CD4-positive, alpha-beta memory T cell (primary cell): ENCODE measurements at regions of chr2 and their contacts with region 1.

Region 1: DNA sequence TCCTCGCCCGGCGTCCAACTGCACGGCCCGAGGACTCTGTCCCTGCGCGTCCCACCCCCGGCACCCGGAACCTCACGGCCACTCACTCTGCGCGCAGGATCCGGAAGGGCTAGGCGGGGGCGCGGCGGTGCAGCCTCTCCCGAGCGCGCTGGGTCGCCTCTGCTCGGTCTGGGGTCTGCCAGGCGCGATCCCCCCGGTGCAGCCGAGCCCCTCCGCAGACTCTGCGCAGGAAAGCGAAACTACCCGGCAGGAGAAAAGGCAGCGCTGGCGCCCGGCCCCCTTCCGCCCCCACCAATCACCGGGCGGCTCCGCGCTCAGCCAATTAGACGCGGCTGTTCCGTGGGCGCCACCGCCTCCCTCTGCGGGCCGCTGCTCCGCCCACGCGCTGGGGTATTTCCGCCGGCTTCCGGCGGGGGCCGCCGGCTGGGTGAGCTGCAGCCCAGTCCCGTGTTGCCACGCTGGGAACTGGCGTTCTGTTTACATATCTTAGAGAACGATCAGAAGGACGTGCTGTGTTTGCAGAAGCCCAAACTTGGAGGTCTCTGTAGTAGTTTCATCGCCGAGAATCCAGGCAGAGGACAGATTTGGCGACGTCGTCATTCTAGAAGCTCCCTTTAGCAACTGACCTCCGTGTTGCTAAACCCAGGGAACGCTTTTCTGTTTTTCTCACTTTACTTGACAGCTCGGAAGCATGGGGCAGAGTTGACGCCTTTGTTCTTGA is at the start of gene STAT1:
- DNase-seq: peak; percentile 94 to 98 (median 96)
- H3K4me3 ChIP-seq: peak within 1 kb of the TSS; percentile 92 to 95
- H3K4me3 Mint-ChIP-seq: no peak within 1 kb of the TSS
- H3K27ac ChIP-seq: peak within 1 kb of the TSS; percentile 89
- H3K27ac Mint-ChIP-seq: no peak within 1 kb of the TSS
- H3K4me1 ChIP-seq: peaks cover 71% of the 10 kb centered on the region
- H3K4me1 Mint-ChIP-seq: peaks cover 29 to 48% (median 33%) of the 10 kb centered on the region in 4 donors
- H3K27me3 ChIP-seq: no peaks in the 10 kb centered on the region
- H3K27me3 Mint-ChIP-seq: no peaks in the 10 kb centered on the region
- total RNA-seq, gene STAT1: 130 TPM

Region 2: DNA sequence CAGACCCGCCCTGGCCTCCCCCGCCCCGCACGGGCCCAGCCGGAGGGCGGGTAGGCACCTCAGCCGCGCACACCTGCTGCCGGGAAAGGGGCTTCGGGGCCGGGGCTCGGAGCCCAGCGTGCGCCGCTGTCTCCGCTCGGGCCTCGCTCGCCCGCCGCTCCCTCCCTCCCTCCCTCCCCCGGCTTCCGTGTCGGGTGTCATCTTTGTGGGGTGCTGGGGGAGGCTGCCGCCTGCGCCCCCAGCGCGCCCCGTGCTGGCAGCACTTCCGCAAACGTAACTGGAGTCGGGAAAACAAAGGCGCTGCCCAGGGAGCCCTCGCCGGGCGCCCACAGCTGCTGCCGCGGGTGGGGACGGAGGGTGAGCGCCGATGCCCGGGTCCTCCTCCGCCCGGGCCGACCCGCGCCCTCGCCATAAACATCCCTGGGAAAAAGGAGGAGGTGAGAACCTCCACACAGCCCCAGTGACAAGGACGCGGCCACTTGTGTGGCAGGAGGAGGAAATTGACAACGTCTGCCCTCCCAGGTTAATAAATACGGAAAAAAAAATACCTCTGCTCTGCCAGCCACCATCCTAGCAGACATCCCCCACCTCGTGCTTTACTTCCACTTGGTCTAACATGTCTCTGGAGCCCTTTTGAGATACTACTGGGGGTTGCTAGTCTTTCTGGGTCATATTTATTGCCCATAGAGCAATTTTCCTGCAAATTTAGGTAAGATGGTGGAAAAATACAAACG is 605.4 kb before region 1 on chr2:
- CTCF ChIA-PET with region 1: no interaction called
- POLR2A ChIA-PET with region 1: no interaction called
- intact Hi-C with region 1: loop called (anchors 10 kb)
- DNase-seq: peak; percentile 78 to 86 (median 84)
- H3K4me3 ChIP-seq: peak overlapping the region; percentile 67 to 78
- H3K4me3 Mint-ChIP-seq: peak overlapping the region; percentile 89 to 95 (median 92)
- H3K27ac ChIP-seq: peak overlapping the region; percentile 96
- H3K27ac Mint-ChIP-seq: peak overlapping the region; percentile 96 to 99 (median 98)
- H3K4me1 ChIP-seq: peaks cover 54% of the 10 kb centered on the region
- H3K4me1 Mint-ChIP-seq: peaks cover 37 to 52% (median 41%) of the 10 kb centered on the region in 4 donors
- H3K27me3 ChIP-seq: no peaks in the 10 kb centered on the region
- H3K27me3 Mint-ChIP-seq: no peaks in the 10 kb centered on the region

Region 3: GRCh38 chr2:190996338-190996946 is 17.6 kb before region 1 on chr2:
- CTCF ChIA-PET with region 1: interaction called, 13 read pairs
- POLR2A ChIA-PET with region 1: interaction called, 5 read pairs
- intact Hi-C with region 1: loop called (anchors 2 kb)
- DNase-seq: peak in 4 of 5 donors; percentile 21 to 40 (median 37)
- H3K4me3 ChIP-seq: no peak overlapping the region
- H3K4me3 Mint-ChIP-seq: no peak overlapping the region
- H3K27ac ChIP-seq: no peak overlapping the region
- H3K27ac Mint-ChIP-seq: peak overlapping the region; percentile 75 to 92 (median 83)
- H3K4me1 ChIP-seq: peaks cover 11% of the 10 kb centered on the region
- H3K4me1 Mint-ChIP-seq: peaks cover 32 to 63% (median 36%) of the 10 kb centered on the region in 4 donors
- H3K27me3 ChIP-seq: no peaks in the 10 kb centered on the region
- H3K27me3 Mint-ChIP-seq: no peaks in the 10 kb centered on the region

Region 4: DNA sequence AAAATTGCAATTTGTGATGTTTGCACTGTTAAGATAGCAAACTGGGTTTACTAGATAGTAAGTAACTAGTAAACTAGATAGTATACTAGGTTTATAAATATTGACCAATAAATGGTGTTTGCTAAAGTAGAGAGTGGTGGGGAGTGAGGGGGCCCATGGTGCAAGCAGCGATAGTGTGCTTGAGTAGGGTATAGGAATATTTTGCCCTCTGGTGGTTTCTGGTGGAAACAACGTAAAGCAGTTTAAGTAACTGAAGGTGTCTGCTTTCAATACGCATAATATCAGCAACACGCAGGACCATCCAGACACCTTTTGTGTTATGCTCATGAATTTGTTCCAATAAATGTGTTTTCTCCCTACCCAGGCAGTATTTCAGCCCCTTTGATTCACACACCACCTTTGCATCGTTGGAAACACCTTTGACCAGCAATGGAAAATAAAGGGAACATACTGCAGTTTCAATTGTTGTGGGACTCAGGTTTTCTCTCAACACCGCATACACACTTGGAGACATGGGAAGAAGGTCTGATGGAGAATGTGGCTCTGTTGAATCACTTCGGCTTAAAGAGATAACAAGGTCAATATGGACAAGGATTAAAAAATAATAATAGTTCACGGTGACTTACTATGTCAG is 16.5 kb after region 1 on chr2:
- CTCF ChIA-PET with region 1: interaction called, 28 read pairs
- POLR2A ChIA-PET with region 1: interaction called, 155 read pairs
- intact Hi-C with region 1: loop called (anchors 1 kb)
- DNase-seq: peak; percentile 52 to 69 (median 56)
- H3K4me3 ChIP-seq: no peak overlapping the region
- H3K4me3 Mint-ChIP-seq: peak overlapping the region in 4 of 8 donors; percentile 1 to 47 (median 7)
- H3K27ac ChIP-seq: peak overlapping the region; percentile 21
- H3K27ac Mint-ChIP-seq: peak overlapping the region; percentile 15 to 84 (median 44)
- H3K4me1 ChIP-seq: peaks cover 34% of the 10 kb centered on the region
- H3K4me1 Mint-ChIP-seq: peaks cover 21 to 37% (median 30%) of the 10 kb centered on the region in 4 donors
- H3K27me3 ChIP-seq: no peaks in the 10 kb centered on the region
- H3K27me3 Mint-ChIP-seq: no peaks in the 10 kb centered on the region

Region 5: DNA sequence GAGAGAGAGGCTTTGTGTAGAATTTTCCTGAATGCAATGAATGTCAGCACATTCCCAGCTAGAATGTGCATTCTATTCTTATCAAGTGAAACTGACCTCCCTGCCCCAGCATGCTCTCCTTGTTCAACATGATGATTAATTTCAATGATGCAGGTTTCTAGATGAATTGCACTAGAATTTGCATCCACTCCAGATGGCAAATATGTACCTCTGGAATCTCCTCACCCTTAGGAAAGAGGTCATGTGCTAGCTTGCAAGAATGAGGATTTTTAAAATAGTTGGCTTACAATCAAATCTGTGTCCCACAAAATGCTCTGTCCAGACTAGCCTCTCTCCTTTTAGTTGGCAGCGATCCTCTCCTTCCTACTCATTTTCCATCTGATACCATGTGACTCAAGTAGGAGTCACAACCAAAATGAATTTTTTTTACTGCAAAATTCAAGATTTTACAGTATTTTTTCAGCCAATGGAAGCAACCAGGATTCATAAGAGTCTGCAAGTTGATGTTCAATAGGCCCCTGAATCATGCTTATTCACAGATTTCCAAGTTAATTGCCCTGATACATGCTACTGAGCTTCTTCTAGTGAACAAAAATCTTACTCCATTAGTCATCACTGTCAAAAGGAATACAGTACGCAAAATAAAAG is 157.7 kb after region 1 on chr2:
- CTCF ChIA-PET with region 1: no interaction called
- POLR2A ChIA-PET with region 1: no interaction called
- intact Hi-C with region 1: no loop called
- DNase-seq: no peak
- H3K4me3 ChIP-seq: no peak overlapping the region
- H3K4me3 Mint-ChIP-seq: no peak overlapping the region
- H3K27ac ChIP-seq: no peak overlapping the region
- H3K27ac Mint-ChIP-seq: no peak overlapping the region
- H3K4me1 ChIP-seq: peaks cover 7% of the 10 kb centered on the region
- H3K4me1 Mint-ChIP-seq: peaks cover 8 to 19% (median 10%) of the 10 kb centered on the region in 4 donors
- H3K27me3 ChIP-seq: no peaks in the 10 kb centered on the region
- H3K27me3 Mint-ChIP-seq: no peaks in the 10 kb centered on the region

Region 6: DNA sequence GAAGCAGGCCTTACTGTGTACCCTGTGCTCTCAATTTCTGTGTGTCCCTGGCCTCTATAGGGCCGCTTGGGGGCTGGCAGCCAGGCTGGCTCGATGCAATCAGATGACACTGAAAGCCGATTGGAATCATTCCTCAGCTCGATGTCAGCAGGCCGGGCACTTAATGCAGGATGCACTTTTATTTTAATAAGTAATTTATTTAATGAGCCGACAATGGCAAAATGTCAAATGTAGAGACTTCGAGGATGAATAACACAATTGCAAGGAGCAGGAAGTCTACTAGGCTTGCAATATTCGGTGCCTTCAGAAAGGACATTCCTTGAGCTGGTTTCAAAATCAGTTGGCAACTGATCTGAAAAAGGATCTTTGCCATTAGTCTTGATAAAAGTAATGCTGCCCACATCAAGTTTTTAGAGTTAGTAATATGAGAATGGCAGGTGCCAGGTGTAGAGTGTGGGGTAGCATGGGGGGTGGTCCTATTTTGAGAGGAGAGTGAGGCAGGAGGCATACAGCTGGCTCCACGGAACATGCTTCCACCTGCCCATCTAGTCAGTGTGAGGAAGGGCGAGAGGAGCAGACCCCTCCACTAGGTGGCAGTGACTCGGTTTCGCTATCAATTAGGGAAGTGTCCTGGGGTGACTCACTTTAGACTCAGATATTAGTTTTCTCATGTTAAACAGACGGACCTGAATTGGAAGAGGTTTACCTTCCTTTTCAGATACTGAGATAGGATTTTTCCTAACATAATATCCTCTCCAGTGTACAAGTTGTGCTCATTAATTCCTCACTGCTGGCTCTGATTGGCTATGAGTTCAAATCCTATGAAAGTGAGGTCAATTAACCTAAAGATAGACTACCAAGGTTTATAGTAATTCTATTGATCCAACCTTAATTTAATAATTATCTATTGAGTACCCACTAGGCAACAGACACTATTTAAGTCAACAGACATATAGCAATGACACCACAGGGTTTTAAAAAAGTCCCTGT is 744.7 kb after region 1 on chr2:
- CTCF ChIA-PET with region 1: no interaction called
- POLR2A ChIA-PET with region 1: no interaction called
- intact Hi-C with region 1: no loop called
- DNase-seq: peak; percentile 23 to 57 (median 35)
- H3K4me3 ChIP-seq: no peak overlapping the region
- H3K4me3 Mint-ChIP-seq: peak overlapping the region in 3 of 8 donors; percentile 12 to 32 (median 18)
- H3K27ac ChIP-seq: no peak overlapping the region
- H3K27ac Mint-ChIP-seq: no peak overlapping the region
- H3K4me1 ChIP-seq: peaks cover 11% of the 10 kb centered on the region
- H3K4me1 Mint-ChIP-seq: peaks cover 4 to 6% (median 5%) of the 10 kb centered on the region in 4 donors
- H3K27me3 ChIP-seq: peaks cover 3% of the 10 kb centered on the region
- H3K27me3 Mint-ChIP-seq: peaks cover 8 to 13% of the 10 kb centered on the region in 2 donors